ENCODE measurements at regions of chr1 and their contacts with region 1.

Region 1: GRCh38 chr1:88998716-88999115 is 6.3 kb upstream of the KYAT3 start:
- DNase-seq: peak; percentile 22
- ATAC-seq: peak; percentile 88
- H3K4me3 Mint-ChIP-seq: no peak overlapping the region
- H3K27ac Mint-ChIP-seq: no peak overlapping the region
- H3K4me1 Mint-ChIP-seq: peaks cover 31% of the 10 kb centered on the region
- H3K27me3 Mint-ChIP-seq: peaks cover 5% of the 10 kb centered on the region

Region 2: DNA sequence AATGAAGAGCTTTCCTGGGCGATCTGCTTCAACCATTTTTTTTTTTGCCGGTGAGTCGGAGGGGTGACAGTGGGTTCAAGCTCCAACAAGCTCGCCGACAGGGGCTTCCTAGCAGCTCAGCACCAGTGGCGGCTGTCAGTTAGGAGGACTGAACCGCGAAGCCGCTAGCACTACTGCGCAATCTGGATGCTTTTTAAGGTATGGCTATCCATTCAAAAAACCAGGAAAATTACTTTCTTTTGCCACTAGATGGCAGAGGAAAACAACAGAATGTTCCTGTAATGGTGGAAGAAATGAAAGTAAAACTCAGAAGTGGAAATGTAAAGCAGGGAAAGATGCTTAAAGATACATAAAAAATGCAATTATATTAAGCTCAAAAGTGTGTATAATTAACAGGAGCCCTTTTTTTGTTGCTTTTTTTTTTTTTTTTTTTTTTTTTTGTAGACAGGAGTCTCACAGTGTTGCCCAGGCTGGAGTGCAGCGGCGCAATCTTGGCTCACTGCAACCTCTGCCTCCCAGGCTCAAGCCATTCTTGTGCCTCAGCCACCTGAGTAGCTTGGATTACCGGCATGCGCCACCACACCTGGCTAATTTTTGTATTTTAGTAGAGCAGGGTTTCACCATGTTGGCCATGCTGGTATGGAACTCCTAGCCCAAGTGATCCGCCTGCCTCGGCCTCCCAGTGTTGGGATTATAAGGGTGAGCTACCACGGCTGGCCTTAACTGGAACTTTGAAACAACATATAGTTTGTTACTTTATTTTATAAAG is 14.7 kb before region 1 on chr1:
- CTCF ChIA-PET with region 1: interaction called, 15 read pairs
- POLR2A ChIA-PET with region 1: no interaction called
- intact Hi-C with region 1: no loop called
- DNase-seq: peak; percentile 47
- ATAC-seq: peak; percentile 29
- H3K4me3 Mint-ChIP-seq: peak overlapping the region; percentile 43
- H3K27ac Mint-ChIP-seq: peak overlapping the region; percentile 87
- H3K4me1 Mint-ChIP-seq: peaks cover 86% of the 10 kb centered on the region
- H3K27me3 Mint-ChIP-seq: no peaks in the 10 kb centered on the region

Region 3: DNA sequence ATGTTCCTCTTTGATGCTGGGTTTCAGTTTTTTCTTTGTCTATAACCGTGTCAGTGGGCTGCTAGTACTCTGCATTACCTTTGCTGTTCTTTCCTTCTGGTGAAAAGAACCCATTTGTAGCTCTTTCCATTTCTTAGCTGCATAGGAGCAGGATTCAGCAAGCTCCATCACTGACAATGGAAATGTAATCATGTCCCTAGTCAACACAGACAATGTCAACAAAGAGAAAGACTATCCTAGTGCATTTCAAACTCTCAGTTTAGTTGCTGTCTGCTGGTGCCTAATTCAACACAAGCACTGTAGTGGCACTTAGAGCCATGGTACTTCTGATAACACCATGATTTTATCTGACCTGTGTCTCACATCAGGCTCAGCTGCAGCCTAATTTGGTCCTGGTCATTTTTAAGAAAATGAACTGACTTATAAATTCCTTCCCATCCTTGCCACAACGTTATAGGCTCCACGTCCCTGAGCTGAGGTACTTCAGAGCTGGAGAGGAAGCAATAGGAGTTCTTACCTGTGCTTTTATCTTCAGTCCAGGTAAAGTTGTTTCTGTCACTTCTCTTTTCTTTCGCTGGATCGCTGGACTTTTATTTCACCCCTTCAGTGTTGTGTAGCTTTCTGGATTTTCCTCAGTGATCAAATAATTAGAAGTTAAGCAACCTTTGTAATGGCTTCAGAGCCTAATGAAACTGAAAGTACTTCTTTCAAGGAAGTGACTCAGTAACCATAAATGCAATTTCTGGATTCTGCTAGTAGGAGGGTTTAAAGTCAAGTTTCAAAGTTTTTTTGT is 23.6 kb after region 1 on chr1 and contains the start of gene GBP3:
- CTCF ChIA-PET with region 1: interaction called, 12 read pairs
- POLR2A ChIA-PET with region 1: no interaction called
- intact Hi-C with region 1: no loop called
- DNase-seq: no peak
- ATAC-seq: peak; percentile 82
- H3K4me3 Mint-ChIP-seq: peak within 1 kb of the TSS; percentile 79
- H3K27ac Mint-ChIP-seq: peak within 1 kb of the TSS; percentile 93
- H3K4me1 Mint-ChIP-seq: peaks cover 54% of the 10 kb centered on the region
- H3K27me3 Mint-ChIP-seq: no peaks in the 10 kb centered on the region
- total RNA-seq, gene GBP3: 4.8 to 5.8 TPM

Region 4: DNA sequence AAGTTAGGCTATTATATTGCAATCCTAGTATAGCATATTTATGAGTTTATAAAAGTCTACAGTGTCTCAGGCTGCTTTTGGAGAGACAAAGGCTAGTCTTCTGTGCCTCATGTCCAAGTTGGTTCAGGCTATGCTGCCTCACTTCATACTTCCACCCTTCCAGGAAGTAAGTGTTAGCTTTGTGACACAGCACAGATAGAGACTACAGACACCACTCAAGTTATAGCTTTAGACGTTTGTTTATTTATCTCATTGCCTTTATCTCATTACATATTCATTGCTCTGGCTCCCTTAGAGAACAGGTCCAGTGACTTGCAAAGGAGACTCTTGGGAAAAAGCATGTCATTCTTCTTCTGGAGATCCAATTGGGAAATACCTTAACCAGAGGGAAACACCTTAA is 222.6 kb after region 1 on chr1:
- CTCF ChIA-PET with region 1: no interaction called
- POLR2A ChIA-PET with region 1: no interaction called
- intact Hi-C with region 1: no loop called
- DNase-seq: no peak
- ATAC-seq: no peak
- H3K4me3 Mint-ChIP-seq: no peak overlapping the region
- H3K27ac Mint-ChIP-seq: no peak overlapping the region
- H3K4me1 Mint-ChIP-seq: peaks cover 3% of the 10 kb centered on the region
- H3K27me3 Mint-ChIP-seq: no peaks in the 10 kb centered on the region

Region 5: DNA sequence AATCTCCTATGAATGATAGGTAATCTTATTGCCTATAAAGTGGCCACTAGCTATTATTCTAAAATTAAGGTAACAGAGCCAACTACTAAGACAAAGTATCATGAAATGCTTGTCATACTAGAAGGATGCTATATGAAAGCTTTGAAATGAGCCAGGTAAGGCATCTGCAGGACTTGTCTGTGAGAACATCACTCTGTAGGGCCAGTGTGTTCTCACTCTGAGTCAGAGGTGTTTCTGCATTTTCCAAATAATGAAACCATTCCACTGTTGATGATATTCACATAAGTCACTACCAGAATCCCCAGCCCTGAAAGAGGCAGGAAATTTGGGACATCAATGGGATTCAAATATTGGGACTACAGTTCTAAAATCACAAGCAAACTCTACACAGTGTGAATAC is 299.7 kb after region 1 on chr1:
- CTCF ChIA-PET with region 1: no interaction called
- POLR2A ChIA-PET with region 1: no interaction called
- intact Hi-C with region 1: no loop called
- DNase-seq: no peak
- ATAC-seq: peak; percentile 16
- H3K4me3 Mint-ChIP-seq: no peak overlapping the region
- H3K27ac Mint-ChIP-seq: no peak overlapping the region
- H3K4me1 Mint-ChIP-seq: peaks cover 59% of the 10 kb centered on the region
- H3K27me3 Mint-ChIP-seq: no peaks in the 10 kb centered on the region

Region 6: DNA sequence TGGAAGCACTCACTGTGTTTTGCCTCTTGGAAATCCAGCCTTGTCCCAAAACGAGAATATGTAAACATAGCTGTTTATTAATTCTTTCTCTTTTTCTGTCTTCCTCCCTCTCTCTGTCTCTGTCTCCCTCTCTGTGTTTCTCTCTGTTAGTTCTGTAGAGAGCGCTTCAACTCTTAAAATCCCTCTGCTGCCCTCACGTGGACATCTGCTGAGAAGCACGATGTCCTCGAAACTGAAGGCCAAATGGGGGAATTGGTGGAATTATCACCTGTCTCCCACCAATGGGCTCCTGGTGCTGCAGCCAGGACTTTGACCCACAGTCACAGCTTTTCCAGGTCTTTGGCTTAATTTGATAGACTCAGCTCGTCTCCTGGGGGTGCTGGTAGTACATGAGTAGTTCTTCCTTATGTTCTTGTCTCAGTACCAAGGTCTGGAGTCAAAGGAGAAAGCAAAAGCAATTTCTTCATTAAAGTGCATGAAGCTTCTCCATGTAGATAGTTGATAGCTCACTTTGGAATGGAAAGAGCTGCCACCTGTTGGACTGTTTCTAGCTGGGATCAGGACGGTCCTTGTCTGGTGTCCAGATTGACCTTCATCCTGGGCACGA is 359.7 kb after region 1 on chr1:
- CTCF ChIA-PET with region 1: interaction called, 7 read pairs
- POLR2A ChIA-PET with region 1: no interaction called
- intact Hi-C with region 1: loop called (anchors 1 kb)
- DNase-seq: peak; percentile 90
- ATAC-seq: peak; percentile 73
- H3K4me3 Mint-ChIP-seq: peak overlapping the region; percentile 55
- H3K27ac Mint-ChIP-seq: peak overlapping the region; percentile 84
- H3K4me1 Mint-ChIP-seq: peaks cover 46% of the 10 kb centered on the region
- H3K27me3 Mint-ChIP-seq: no peaks in the 10 kb centered on the region

Measured in activated CD4-positive, alpha-beta T cell treated with anti-CD3 and anti-CD28 coated beads for 36 hours (primary cell).